ENCODE measurements at regions of chr16 and their contacts with region 1.

Region 1: DNA sequence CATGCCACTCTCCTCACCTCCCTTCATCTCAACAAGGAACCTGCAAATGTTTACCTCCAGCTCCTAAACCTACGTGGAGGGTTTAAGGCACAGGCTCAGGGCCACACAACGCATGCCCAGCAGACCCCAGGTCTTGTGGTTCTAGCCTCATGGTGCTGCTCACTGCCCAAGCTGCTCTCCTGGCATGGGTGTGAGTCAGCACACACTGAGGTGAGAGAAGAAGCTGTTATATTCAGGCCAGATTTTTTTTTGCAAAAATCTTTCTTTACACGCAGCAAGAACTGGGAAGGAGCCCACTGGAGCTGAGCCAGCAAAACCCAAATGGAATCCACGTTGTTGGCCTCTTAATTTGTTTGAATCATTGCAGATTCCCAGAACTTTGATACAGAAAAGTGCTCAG is 5.5 kb upstream of the C16orf96 start:
- DNase-seq: no peak
- H3K4me3 Mint-ChIP-seq: no peak overlapping the region
- H3K27ac Mint-ChIP-seq: no peak overlapping the region
- H3K4me1 Mint-ChIP-seq: peaks cover 4% of the 10 kb centered on the region
- H3K27me3 Mint-ChIP-seq: peaks cover 5% of the 10 kb centered on the region

Region 2: DNA sequence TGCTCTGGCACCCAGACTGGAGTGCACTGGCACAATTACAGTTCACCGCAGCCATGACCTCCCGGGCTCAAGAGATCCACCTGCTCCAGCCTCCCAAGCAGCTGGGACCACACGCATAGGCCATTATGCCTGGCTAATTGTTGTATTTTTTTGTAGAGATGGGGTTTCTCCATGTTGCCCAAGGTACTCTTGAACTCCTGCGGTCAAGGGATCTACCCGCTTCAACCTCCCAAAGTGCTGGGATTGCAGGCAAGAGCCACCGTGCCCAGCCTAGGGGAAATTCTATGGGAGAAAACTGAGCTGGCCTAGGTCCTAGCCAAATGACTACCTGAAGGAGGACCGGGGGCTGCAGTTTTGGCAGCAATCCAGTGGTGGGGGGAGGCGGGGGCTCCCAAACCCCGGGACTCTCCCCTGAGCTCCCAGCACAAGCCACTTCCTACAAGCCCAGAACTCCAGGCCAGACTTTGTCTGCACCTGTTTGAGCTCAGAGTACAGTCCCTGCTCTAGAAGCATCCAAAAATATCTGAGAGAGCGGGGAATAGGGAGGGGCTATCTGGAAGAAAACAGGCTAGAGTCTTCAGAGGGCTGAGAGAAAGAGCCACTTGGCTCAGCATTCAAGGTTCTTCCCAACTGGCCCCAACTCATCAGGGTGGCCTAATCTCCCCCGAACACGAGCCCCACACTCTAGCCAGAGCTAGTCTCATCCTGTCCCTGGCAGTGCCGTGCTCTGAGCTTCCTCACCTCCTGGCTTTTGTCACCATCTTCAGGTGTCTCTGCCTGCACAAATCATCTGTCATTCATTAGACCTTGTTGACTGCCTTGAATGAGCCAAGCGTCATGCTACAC is 317.8 kb before region 1 on chr16:
- CTCF ChIA-PET with region 1: no interaction called
- POLR2A ChIA-PET with region 1: no interaction called
- DNase-seq: no peak
- H3K4me3 Mint-ChIP-seq: no peak overlapping the region
- H3K27ac Mint-ChIP-seq: no peak overlapping the region
- H3K4me1 Mint-ChIP-seq: no peaks in the 10 kb centered on the region
- H3K27me3 Mint-ChIP-seq: peaks cover 16% of the 10 kb centered on the region

Region 3: DNA sequence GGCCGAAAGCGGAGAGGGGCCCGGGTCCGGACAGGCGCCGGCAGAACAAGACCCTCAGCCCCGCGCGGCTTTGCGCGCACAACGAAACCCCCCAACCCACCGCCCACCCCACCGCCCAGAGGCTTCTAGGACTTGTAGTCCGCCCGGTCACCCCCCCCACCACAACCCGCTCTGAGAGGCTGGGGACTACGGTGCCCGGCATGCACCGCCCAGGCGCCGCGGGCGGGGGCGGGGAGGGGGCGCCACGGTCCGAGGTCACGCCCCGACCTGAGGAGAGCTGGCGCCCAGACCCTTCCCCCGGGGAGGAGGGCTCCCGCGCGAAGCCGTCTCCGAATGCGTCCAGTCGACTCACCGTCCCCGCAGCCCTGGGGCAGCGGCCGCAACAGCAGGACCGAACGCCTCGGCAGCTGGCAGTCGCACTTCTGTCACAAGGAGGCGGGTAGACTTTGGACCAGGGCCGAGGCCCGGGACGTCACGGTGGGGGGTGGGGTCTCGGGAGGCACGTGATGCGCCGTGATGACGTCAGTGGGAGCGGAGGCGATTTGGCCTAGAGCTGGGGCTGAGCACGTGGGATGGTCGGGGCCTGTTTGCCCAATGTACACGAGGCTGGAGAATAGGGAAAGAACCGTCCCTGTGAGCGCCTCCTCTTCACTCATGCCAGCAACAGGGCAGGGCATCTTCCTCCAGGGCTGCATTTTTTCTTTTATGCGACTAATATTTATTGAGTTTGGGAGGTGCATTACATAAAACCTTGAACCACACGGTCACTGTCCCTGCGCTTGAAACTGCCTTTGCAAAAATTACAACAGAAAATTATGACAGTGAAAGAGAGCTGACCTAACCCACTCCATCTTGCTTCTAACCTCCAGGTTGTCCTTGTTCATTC is 12.0 kb before region 1 on chr16 and contains the start of gene CDIP1:
- CTCF ChIA-PET with region 1: interaction called, 24 read pairs
- POLR2A ChIA-PET with region 1: interaction called, 3 read pairs
- DNase-seq: peak; percentile 95
- H3K4me3 Mint-ChIP-seq: peak within 1 kb of the TSS; percentile 61
- H3K27ac Mint-ChIP-seq: peak within 1 kb of the TSS; percentile 59
- H3K4me1 Mint-ChIP-seq: peaks cover 34% of the 10 kb centered on the region
- H3K27me3 Mint-ChIP-seq: peaks cover 1% of the 10 kb centered on the region
- total RNA-seq, gene CDIP1: 28.7 to 30.7 TPM

Region 4: GRCh38 chr16:4641895-4642294 is 91.3 kb after region 1 on chr16:
- CTCF ChIA-PET with region 1: no interaction called
- POLR2A ChIA-PET with region 1: no interaction called
- DNase-seq: no peak
- H3K4me3 Mint-ChIP-seq: no peak overlapping the region
- H3K27ac Mint-ChIP-seq: no peak overlapping the region
- H3K4me1 Mint-ChIP-seq: peaks cover 15% of the 10 kb centered on the region
- H3K27me3 Mint-ChIP-seq: no peaks in the 10 kb centered on the region

Measured in activated CD4-positive, alpha-beta memory T cell treated with anti-CD3 and anti-CD28 coated beads, Interleukin-2, amount 10 ng/mL, durations not matched to agents 7 days and 5 days (primary cell).